H1 (cell line): ENCODE measurements at regions of chr9 and their contacts with region 1.

Region 1: GRCh38 chr9:79571309-79572031 is at the start of gene TLE4:
- DNase-seq: peak; percentile 97 to 100
- H3K4me3 ChIP-seq: peak within 1 kb of the TSS; percentile 81 to 99 (median 82)
- H3K27ac ChIP-seq: peak within 1 kb of the TSS; percentile 92
- H3K4me1 ChIP-seq: peaks cover 0 to 8% (median 3%) of the 10 kb centered on the region in 4 experiments; a peak in 2 of 7 replicates
- H3K27me3 ChIP-seq: no peaks in the 10 kb centered on the region
- CTCF ChIP-seq: no peak
- EP300 ChIP-seq: peak in 1 of 2 experiments; percentile 3; a peak in 1 of 3 replicates
- POLR2A ChIP-seq: peak; percentile 92 to 98
- RAD21 ChIP-seq: no peak
- total RNA-seq, gene TLE4: 36.9 and 39.2 TPM in 2 replicates

Region 2: GRCh38 chr9:79583952-79584654 is 12.6 kb after region 1 on chr9:
- CTCF ChIA-PET with region 1: interaction called, 5 read pairs
- POLR2A ChIA-PET with region 1: interaction called, 36 read pairs
- DNase-seq: no peak
- H3K4me3 ChIP-seq: no peak overlapping the region
- H3K27ac ChIP-seq: no peak overlapping the region
- H3K4me1 ChIP-seq: peaks cover 5 to 11% (median 9%) of the 10 kb centered on the region in 4 experiments
- H3K27me3 ChIP-seq: no peaks in the 10 kb centered on the region
- CTCF ChIP-seq: no peak
- EP300 ChIP-seq: no peak
- POLR2A ChIP-seq: 0 out of 3 replicates have a peak, but pooled peaks of 1 of the 2 experiments have one; percentile 33
- RAD21 ChIP-seq: no peak

Region 3: GRCh38 chr9:79603222-79603920 is 31.9 kb after region 1 on chr9:
- CTCF ChIA-PET with region 1: no interaction called
- POLR2A ChIA-PET with region 1: interaction called, 11 read pairs
- DNase-seq: no peak
- H3K4me3 ChIP-seq: no peak overlapping the region
- H3K27ac ChIP-seq: no peak overlapping the region
- H3K4me1 ChIP-seq: peaks cover 0 to 3% (median 0%) of the 10 kb centered on the region in 4 experiments; a peak in 1 of 7 replicates
- H3K27me3 ChIP-seq: no peaks in the 10 kb centered on the region
- CTCF ChIP-seq: no peak
- EP300 ChIP-seq: no peak
- POLR2A ChIP-seq: no peak
- RAD21 ChIP-seq: no peak

Region 4: GRCh38 chr9:79694676-79695400 is 123.4 kb after region 1 on chr9:
- CTCF ChIA-PET with region 1: no interaction called
- POLR2A ChIA-PET with region 1: interaction called, 14 read pairs
- DNase-seq: peak in 1 of 2 experiments; percentile 39
- H3K4me3 ChIP-seq: peak overlapping the region in 1 of 4 experiments; percentile 35; a peak in 1 of 8 replicates
- H3K27ac ChIP-seq: no peak overlapping the region
- H3K4me1 ChIP-seq: peaks cover 7 to 34% (median 27%) of the 10 kb centered on the region in 4 experiments; a peak in 6 of 7 replicates
- H3K27me3 ChIP-seq: no peaks in the 10 kb centered on the region
- CTCF ChIP-seq: no peak
- EP300 ChIP-seq: no peak
- POLR2A ChIP-seq: no peak
- RAD21 ChIP-seq: no peak